Activated naive CD4-positive, alpha-beta T cell treated with anti-CD3 and anti-CD28 coated beads, Interleukin-2, amount 10 ng/mL, durations not matched to agents 7 days and 5 days (primary cell): ENCODE measurements at regions of chr11 and their contacts with region 1.

Region 1: GRCh38 chr11:9613118-9613829 is 39.8 kb downstream of the WEE1 start:
- DNase-seq: peak; percentile 91
- H3K4me3 Mint-ChIP-seq: peak overlapping the region; percentile 84
- H3K27ac Mint-ChIP-seq: peak overlapping the region; percentile 98
- H3K4me1 Mint-ChIP-seq: peaks cover 30% of the 10 kb centered on the region
- H3K27me3 Mint-ChIP-seq: no peaks in the 10 kb centered on the region

Region 2: GRCh38 chr11:9575260-9576240 is 37.7 kb before region 1 on chr11:
- CTCF ChIA-PET with region 1: interaction called, 11 read pairs
- DNase-seq: no peak
- H3K4me3 Mint-ChIP-seq: peak overlapping the region; percentile 93
- H3K27ac Mint-ChIP-seq: peak overlapping the region; percentile 82
- H3K4me1 Mint-ChIP-seq: peaks cover 52% of the 10 kb centered on the region
- H3K27me3 Mint-ChIP-seq: peaks cover 11% of the 10 kb centered on the region

Region 3: GRCh38 chr11:9594267-9595046 is 18.8 kb before region 1 on chr11:
- CTCF ChIA-PET with region 1: interaction called, 23 read pairs
- DNase-seq: no peak
- H3K4me3 Mint-ChIP-seq: no peak overlapping the region
- H3K27ac Mint-ChIP-seq: peak overlapping the region; percentile 1
- H3K4me1 Mint-ChIP-seq: no peaks in the 10 kb centered on the region
- H3K27me3 Mint-ChIP-seq: peaks cover 9% of the 10 kb centered on the region

Region 4: DNA sequence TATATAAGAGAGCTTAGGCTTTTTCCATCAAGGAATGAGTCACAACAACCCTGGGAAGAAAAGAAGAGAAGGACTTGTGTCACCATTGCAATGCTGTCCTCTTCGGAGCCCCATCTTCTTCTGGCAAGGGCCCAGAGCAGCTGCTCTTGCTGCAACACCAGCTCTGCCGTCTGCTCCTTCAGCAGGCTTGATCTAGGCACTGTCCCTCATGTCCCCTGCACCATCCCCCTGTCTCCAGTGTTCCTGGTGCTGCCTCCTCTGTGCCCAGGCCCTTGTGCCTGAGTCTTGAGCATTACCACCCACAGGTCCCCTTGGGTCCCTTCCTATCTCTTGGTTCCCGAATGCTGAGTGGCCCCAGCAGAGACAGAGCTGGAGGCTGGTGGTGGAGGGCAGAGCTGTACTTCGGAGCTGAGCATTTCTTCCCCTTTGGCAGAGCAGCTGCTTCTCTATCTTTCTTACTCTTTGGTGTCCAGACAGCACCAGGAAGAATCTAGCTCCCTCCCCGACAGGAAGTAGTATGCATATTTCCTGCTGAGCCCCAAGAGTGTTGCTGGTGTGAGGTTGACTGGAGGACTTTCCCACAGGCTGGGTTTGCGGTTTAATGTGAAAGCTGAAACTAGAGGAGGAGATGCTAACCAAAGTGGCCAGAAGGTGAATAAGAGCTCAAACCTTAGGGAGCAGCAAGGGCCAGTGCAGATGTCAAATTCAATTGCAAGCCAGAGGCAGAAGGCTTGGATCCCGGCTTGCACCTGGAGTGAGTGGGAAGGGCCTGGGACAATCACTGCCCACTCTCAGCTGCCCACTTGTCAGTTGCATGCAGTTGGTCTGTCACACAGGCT is 12.0 kb before region 1 on chr11:
- CTCF ChIA-PET with region 1: interaction called, 23 read pairs
- DNase-seq: peak; percentile 82
- H3K4me3 Mint-ChIP-seq: peak overlapping the region; percentile 69
- H3K27ac Mint-ChIP-seq: peak overlapping the region; percentile 88
- H3K4me1 Mint-ChIP-seq: peaks cover 29% of the 10 kb centered on the region
- H3K27me3 Mint-ChIP-seq: peaks cover 15% of the 10 kb centered on the region

Region 5: DNA sequence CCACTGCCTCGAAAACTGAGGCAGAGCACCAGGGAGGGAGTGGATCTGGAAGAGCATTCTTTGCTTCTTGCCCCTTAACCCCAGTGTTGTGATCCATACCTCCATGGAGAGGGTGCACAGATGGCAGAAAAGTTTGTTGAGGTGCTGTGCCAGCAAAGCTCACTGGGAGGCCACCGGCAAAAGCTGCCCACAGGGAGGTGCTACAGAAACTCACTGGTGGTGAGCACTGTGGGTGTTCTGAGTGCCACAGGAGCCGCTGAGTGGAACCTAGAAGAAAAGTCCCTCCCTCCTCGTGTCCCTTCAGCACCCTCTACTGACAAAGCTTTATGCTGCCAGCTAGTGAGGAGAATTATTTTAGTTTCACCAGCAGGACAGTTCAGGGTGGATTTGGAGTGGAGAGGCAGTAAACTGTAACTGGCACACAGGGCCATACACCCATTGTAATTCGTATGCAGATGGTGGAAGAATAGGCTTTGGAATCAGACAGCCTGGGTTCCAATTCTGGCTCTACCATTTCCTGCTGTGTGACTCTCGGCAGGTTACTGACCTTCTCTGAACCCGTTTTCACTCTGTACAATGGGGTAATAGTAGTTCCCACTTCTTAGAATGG is 135.2 kb after region 1 on chr11:
- CTCF ChIA-PET with region 1: interaction called, 63 read pairs
- DNase-seq: peak; percentile 80
- H3K4me3 Mint-ChIP-seq: no peak overlapping the region
- H3K27ac Mint-ChIP-seq: no peak overlapping the region
- H3K4me1 Mint-ChIP-seq: peaks cover 18% of the 10 kb centered on the region
- H3K27me3 Mint-ChIP-seq: peaks cover 4% of the 10 kb centered on the region